ENCODE measurements at regions of chr2 and their contacts with region 1.

Region 1: DNA sequence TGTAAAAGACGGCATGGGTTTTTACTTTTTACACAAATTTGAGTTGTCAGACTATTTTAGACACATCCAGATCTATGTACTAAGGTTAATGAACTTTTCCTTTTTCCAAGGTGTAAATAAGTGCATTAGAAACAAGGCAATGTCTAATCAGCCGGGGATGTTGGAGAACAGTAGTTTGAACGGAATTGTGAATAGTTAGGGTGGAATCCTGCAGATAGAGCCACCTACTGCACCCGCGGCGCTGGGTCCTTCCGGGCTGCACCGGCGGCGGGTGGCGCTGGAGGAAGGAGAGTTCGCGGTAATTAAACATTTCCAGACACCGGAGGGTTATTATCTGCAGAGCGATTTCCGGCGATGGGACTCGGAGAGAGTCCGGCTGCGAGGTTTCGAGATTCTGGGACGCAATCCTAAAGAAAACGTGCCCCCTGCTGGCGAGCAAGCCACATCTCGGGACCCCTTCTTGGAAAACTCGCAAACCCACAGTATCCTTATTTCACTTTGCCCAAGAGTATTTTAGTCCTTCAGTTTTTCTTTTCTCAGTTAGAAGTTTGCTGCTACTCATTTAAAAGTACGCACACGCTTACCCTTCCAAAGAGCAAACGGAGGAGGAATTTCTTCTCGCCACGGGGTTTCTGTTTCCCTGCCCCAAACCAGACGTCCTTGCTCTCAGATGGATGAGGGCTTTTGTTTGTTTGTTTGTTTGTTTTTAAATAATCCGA is 4.5 kb upstream of the OSR1 start:
- DNase-seq: peak; percentile 83 to 84 (median 84)
- ATAC-seq: peak; percentile 76 to 84 (median 78)
- H3K4me3 ChIP-seq: peak overlapping the region; percentile 50 to 76 (median 61)
- H3K27ac ChIP-seq: peak overlapping the region in 2 of 3 donors; percentile 30 to 53
- H3K4me1 ChIP-seq: peaks cover 0 to 14% (median 5%) of the 10 kb centered on the region in 4 donors
- H3K27me3 ChIP-seq: peaks cover 0 to 8% of the 10 kb centered on the region in 2 donors
- CTCF ChIP-seq: peak; percentile 69 to 84 (median 78)
- POLR2A ChIP-seq: no peak

Region 2: DNA sequence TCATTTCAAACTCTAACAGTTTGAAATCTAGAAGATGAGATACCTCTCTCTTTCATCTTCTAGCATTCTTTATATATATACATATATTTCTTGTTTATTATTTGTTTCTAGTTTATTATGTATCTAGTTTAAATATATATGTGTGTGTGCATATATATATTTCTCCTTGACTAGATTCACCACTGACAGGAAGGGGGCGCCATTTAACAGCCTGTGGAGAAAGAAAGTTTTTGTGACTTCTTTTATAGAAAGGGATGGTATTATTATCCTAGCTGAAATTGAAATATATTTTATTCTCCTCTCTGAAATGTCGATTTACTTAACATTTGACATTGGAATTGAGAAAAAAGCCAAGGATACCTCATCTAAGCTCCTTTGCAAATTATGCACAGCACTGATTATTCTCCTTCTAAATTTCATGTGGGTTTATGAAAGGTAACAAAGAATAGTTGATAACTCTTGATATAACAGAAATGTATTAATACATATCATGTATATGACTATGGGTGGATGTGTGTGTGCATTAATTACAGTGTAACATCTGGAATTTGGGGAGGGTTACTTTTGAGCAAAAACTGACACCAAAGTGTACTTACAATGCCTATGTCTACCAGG is 612.9 kb before region 1 on chr2:
- intact Hi-C with region 1: loop called in 1 of 2 experiments (anchors 10 kb)
- DNase-seq: peak in 1 of 3 donors; percentile 51
- ATAC-seq: peak in 3 of 4 donors; percentile 59 to 65 (median 61)
- H3K4me3 ChIP-seq: no peak overlapping the region
- H3K27ac ChIP-seq: no peak overlapping the region
- H3K4me1 ChIP-seq: no peaks in the 10 kb centered on the region
- H3K27me3 ChIP-seq: no peaks in the 10 kb centered on the region
- CTCF ChIP-seq: peak; percentile 71 to 81 (median 78)
- POLR2A ChIP-seq: no peak

Region 3: DNA sequence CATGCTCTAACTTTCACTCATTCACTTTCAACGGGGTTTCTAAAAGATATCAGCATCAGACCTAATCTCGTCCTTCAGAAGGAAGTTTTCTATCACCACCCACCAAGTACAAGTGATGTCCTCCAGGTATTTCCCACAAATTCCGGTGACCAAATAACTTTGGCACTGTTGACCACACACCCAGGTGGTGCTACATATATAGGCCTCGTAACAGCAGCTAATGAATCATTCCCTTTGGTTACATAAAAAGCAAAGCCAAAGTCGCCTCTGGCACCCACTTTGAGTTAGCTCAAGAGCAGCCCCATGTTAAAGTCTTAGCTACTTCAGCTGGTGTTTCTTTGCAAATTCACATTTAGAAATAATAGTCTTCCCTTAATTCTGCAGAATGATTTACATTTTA is 133.7 kb after region 1 on chr2:
- intact Hi-C with region 1: no loop called
- DNase-seq: no peak
- ATAC-seq: no peak
- H3K4me3 ChIP-seq: no peak overlapping the region
- H3K27ac ChIP-seq: no peak overlapping the region
- H3K4me1 ChIP-seq: no peaks in the 10 kb centered on the region
- H3K27me3 ChIP-seq: no peaks in the 10 kb centered on the region
- CTCF ChIP-seq: no peak
- POLR2A ChIP-seq: no peak

Measured in right lobe of liver (tissue), 6 donors.